ENCODE measurements at regions of chr6 and their contacts with region 1.

Region 1: GRCh38 chr6:129683601-129684322 is 26.2 kb downstream of the ARHGAP18 start:
- DNase-seq: peak; percentile 85 to 90
- ATAC-seq: peak; percentile 87
- H3K4me3 ChIP-seq: no peak overlapping the region
- H3K27ac ChIP-seq: no peak overlapping the region
- H3K4me1 ChIP-seq: peaks cover 2% of the 10 kb centered on the region in 2 donors
- H3K27me3 ChIP-seq: no peaks in the 10 kb centered on the region

Region 2: GRCh38 chr6:128966934-128967333 is 716.8 kb before region 1 on chr6:
- intact Hi-C with region 1: no loop called
- DNase-seq: no peak
- ATAC-seq: no peak
- H3K4me3 ChIP-seq: no peak overlapping the region
- H3K27ac ChIP-seq: no peak overlapping the region
- H3K4me1 ChIP-seq: no peaks in the 10 kb centered on the region
- H3K27me3 ChIP-seq: no peaks in the 10 kb centered on the region

Region 3: GRCh38 chr6:129709769-129710449 is 26.1 kb after region 1 on chr6 and contains the start of gene ARHGAP18:
- intact Hi-C with region 1: loop called in 1 of 2 experiments (anchors 2 kb)
- DNase-seq: peak; percentile 95
- ATAC-seq: peak; percentile 95
- H3K4me3 ChIP-seq: peak within 1 kb of the TSS; percentile 46 to 76
- H3K27ac ChIP-seq: peak within 1 kb of the TSS in 1 of 2 donors; percentile 46
- H3K4me1 ChIP-seq: no peaks in the 10 kb centered on the region
- H3K27me3 ChIP-seq: no peaks in the 10 kb centered on the region
- total RNA-seq, gene ARHGAP18: 16.3 to 24.4 TPM